ENCODE measurements at regions of chr10 and their contacts with region 1.

Region 1: GRCh38 chr10:101525848-101526247 is 62.2 kb downstream of the POLL start:
- DNase-seq: no peak
- H3K4me3 ChIP-seq: no peak overlapping the region
- H3K27ac ChIP-seq: no peak overlapping the region
- H3K27me3 ChIP-seq: no peaks in the 10 kb centered on the region
- CTCF ChIP-seq: no peak

Region 2: GRCh38 chr10:101485681-101486554 is 39.9 kb before region 1 on chr10:
- CTCF ChIA-PET with region 1: no interaction called
- POLR2A ChIA-PET with region 1: interaction called, 11 read pairs
- DNase-seq: no peak
- H3K4me3 ChIP-seq: no peak overlapping the region
- H3K27ac ChIP-seq: no peak overlapping the region
- H3K27me3 ChIP-seq: no peaks in the 10 kb centered on the region
- CTCF ChIP-seq: no peak

Region 3: GRCh38 chr10:101513733-101514132 is 12.1 kb before region 1 on chr10:
- CTCF ChIA-PET with region 1: no interaction called
- POLR2A ChIA-PET with region 1: no interaction called
- DNase-seq: no peak
- H3K4me3 ChIP-seq: no peak overlapping the region
- H3K27ac ChIP-seq: no peak overlapping the region
- H3K27me3 ChIP-seq: no peaks in the 10 kb centered on the region
- CTCF ChIP-seq: no peak